Activated CD8-positive, alpha-beta memory T cell treated with anti-CD3 and anti-CD28 coated beads, Interleukin-2, amount 10 ng/mL, durations not matched to agents 7 days and 5 days (primary cell): ENCODE measurements at regions of chr11 and their contacts with region 1.

Region 1: GRCh38 chr11:3854977-3855807 is at the start of gene STIM1:
- DNase-seq: peak; percentile 98
- ATAC-seq: peak; percentile 74
- H3K4me3 Mint-ChIP-seq: peak within 1 kb of the TSS; percentile 86
- H3K27ac Mint-ChIP-seq: peak within 1 kb of the TSS; percentile 97
- H3K4me1 Mint-ChIP-seq: peaks cover 56% of the 10 kb centered on the region
- H3K27me3 Mint-ChIP-seq: no peaks in the 10 kb centered on the region
- total RNA-seq, gene STIM1: 83.5 to 104 TPM

Region 2: GRCh38 chr11:3723014-3723708 is 132.0 kb before region 1 on chr11:
- CTCF ChIA-PET with region 1: no interaction called
- DNase-seq: no peak
- ATAC-seq: no peak
- H3K4me3 Mint-ChIP-seq: no peak overlapping the region
- H3K27ac Mint-ChIP-seq: peak overlapping the region; percentile 46
- H3K4me1 Mint-ChIP-seq: peaks cover 2% of the 10 kb centered on the region
- H3K27me3 Mint-ChIP-seq: no peaks in the 10 kb centered on the region

Region 3: DNA sequence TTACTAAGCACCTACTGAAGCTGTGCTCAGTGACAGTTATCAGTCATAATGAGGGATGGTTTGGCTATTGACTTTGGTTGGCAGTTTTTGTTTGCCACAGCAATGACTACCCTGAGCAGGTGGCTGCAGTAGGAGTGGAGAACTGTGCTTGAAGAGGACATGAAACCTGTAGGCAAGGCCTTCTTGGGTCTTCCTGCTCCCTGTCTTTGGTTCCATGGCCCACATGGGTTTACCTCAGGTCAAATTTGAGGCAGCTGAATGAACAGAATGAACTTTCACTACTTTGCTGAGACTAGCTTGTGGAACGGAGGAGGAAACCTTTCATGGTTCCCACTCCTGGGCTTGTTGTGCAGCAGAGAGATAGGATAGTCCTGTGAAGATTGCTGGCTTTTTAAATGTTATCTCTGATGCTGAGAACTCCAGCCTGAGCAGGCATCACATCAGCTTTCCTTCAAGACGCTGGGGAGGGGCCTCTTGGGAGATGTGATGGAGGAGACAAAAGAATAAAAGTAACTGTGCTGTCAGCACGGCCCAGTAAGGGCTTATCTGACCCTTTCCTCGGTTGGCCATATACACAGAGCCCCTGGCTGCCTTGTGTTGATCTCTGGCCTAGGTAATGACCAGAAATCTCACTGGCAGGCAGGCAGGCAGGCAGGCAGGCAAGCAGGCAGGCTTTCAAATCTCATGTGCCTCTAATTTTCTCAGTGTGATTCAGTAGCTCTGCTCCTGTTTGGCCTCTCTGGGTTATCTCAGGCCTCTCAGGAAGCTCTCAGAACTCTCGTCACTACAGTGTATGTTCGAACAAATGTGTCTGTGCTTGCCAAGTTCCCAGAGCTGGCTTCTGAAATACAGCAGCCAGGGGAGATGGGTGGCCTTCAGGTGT is 12.3 kb after region 1 on chr11:
- CTCF ChIA-PET with region 1: interaction called, 90 read pairs
- DNase-seq: no peak
- ATAC-seq: no peak
- H3K4me3 Mint-ChIP-seq: no peak overlapping the region
- H3K27ac Mint-ChIP-seq: peak overlapping the region; percentile 1
- H3K4me1 Mint-ChIP-seq: peaks cover 74% of the 10 kb centered on the region
- H3K27me3 Mint-ChIP-seq: no peaks in the 10 kb centered on the region

Region 4: DNA sequence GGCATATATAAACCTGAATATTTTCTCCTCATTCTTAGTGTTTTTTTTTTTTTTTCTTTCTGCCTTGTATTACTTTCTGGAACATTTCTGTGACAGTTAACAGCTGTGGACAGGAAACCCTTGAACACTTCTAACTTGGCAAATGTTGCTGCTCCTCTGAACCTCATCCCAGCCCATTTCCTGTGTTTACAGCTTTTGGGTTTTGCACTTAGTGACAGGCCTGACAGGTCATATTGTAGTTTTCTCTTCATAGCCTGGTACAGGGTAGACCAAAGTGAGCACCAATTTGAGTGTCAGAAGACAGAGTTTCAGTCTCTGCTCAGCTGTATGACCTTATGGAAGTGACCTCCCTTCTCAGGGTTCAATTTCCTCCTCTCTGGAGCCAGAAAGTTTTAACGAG is 91.9 kb after region 1 on chr11:
- CTCF ChIA-PET with region 1: interaction called, 62 read pairs
- DNase-seq: peak; percentile 88
- ATAC-seq: peak; percentile 80
- H3K4me3 Mint-ChIP-seq: peak overlapping the region; percentile 70
- H3K27ac Mint-ChIP-seq: peak overlapping the region; percentile 98
- H3K4me1 Mint-ChIP-seq: peaks cover 94% of the 10 kb centered on the region
- H3K27me3 Mint-ChIP-seq: no peaks in the 10 kb centered on the region

Region 5: GRCh38 chr11:3984896-3985295 is 129.7 kb after region 1 on chr11:
- CTCF ChIA-PET with region 1: interaction called, 22 read pairs
- DNase-seq: peak; percentile 61
- ATAC-seq: peak; percentile 72
- H3K4me3 Mint-ChIP-seq: no peak overlapping the region
- H3K27ac Mint-ChIP-seq: no peak overlapping the region
- H3K4me1 Mint-ChIP-seq: peaks cover 50% of the 10 kb centered on the region
- H3K27me3 Mint-ChIP-seq: no peaks in the 10 kb centered on the region

Region 6: DNA sequence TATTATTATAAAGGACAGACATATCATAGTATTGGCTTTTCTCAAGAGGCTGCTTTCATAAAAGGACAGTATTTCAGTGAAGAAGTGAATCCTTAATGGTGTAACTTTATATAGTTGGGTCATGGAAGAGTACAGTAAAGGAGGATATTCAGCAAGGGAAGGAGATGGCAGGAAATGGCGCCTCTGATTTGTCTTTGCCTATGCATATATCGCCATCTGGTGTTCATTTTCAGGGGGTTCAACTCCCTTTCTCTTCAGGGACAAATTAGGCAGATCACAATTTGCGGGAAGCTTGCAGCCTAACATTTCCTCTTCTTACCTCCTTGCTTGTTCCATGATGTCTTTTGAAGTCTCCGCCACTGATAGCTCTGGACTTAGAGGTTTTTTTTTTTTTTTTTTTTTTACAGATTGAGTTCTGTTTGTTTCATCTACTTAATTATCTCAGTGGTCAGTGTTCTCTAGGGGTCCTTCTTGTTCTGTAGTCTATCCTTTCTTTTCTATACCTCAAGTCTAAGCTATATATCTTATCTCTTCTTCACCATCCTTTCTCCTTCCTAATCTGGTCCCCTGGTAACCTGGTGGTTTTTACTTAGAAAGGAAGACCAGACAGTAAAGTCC is 217.6 kb after region 1 on chr11:
- CTCF ChIA-PET with region 1: interaction called, 474 read pairs
- DNase-seq: peak; percentile 59
- ATAC-seq: peak; percentile 80
- H3K4me3 Mint-ChIP-seq: no peak overlapping the region
- H3K27ac Mint-ChIP-seq: no peak overlapping the region
- H3K4me1 Mint-ChIP-seq: peaks cover 26% of the 10 kb centered on the region
- H3K27me3 Mint-ChIP-seq: no peaks in the 10 kb centered on the region